WTC11 (cell line): ENCODE measurements at regions of chr12 and their contacts with region 1.

Region 1: GRCh38 chr12:6554168-6555017 is 1.4 kb downstream of the IFFO1 start:
- DNase-seq: peak; percentile 93
- ATAC-seq: peak; percentile 79
- H3K4me3 Mint-ChIP-seq: peak overlapping the region; percentile 91
- H3K27ac Mint-ChIP-seq: peak overlapping the region; percentile 39
- H3K4me1 Mint-ChIP-seq: peaks cover 29% of the 10 kb centered on the region
- H3K27me3 Mint-ChIP-seq: no peaks in the 10 kb centered on the region
- CTCF ChIP-seq: peak; percentile 71

Region 2: GRCh38 chr12:6533923-6534694 is 20.3 kb before region 1 on chr12 and contains the start of gene GAPDH:
- CTCF ChIA-PET with region 1: interaction called, 195 read pairs
- POLR2A ChIA-PET with region 1: interaction called, 11 read pairs
- DNase-seq: peak; percentile 87
- ATAC-seq: peak; percentile 51
- H3K4me3 Mint-ChIP-seq: peak within 1 kb of the TSS; percentile 87
- H3K27ac Mint-ChIP-seq: peak within 1 kb of the TSS; percentile 99
- H3K4me1 Mint-ChIP-seq: peaks cover 39% of the 10 kb centered on the region
- H3K27me3 Mint-ChIP-seq: no peaks in the 10 kb centered on the region
- CTCF ChIP-seq: no peak
- total RNA-seq, gene GAPDH: 4,276 to 4,694 TPM (median 4,682 TPM) in 3 replicates

Region 3: DNA sequence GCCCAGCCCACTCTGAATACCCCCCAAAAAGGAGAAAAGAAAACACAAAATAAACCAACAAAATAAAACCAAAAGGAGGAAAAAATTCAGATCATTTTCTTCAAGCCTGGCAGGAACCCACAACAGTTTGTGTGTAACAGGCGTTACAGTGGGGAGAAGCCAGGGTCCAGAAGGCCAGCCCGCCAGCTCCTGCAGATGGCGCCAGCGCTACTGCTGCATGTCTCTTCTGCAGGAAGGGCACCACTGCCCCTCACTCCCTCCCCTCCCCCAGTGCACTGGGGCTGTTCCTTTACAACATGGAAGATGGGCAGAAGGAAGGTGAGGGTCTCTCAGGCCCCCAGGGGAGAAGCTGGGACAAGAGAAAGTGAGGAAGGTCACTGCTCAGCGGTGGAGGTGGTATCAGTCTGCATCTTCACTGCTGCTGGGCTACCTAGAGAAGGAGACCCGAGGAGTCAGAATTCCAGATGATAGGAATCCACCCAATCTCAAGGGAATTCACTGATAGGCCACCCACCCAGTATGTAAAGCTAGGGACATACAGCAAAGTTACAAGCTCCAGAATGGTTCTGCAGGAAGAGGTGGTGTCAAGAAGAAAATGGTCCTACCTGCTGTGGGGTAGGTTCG is 16.0 kb after region 1 on chr12:
- CTCF ChIA-PET with region 1: interaction called, 34 read pairs
- POLR2A ChIA-PET with region 1: interaction called, 3 read pairs
- DNase-seq: peak; percentile 86
- ATAC-seq: peak; percentile 70
- H3K4me3 Mint-ChIP-seq: peak overlapping the region; percentile 35; the same call in 1 of the 2 replicates
- H3K27ac Mint-ChIP-seq: peak overlapping the region; percentile 62
- H3K4me1 Mint-ChIP-seq: peaks cover 13% of the 10 kb centered on the region
- H3K27me3 Mint-ChIP-seq: no peaks in the 10 kb centered on the region
- CTCF ChIP-seq: no peak